Left lung (tissue), 14 donors: ENCODE measurements at regions of chr19 and their contacts with region 1.

Region 1: GRCh38 chr19:11035441-11036377 is 53.6 kb upstream of the LDLR start:
- DNase-seq: peak; percentile 64 to 95 (median 90)
- ATAC-seq: peak; percentile 98
- H3K4me3 ChIP-seq: no peak overlapping the region
- H3K27ac ChIP-seq: peak overlapping the region in 1 of 2 donors; percentile 28
- H3K4me1 ChIP-seq: peaks cover 0 to 13% of the 10 kb centered on the region in 2 donors
- H3K27me3 ChIP-seq: no peaks in the 10 kb centered on the region
- CTCF ChIP-seq: peak; percentile 77 to 87

Region 2: GRCh38 chr19:10858204-10858828 is 177.4 kb before region 1 on chr19:
- intact Hi-C with region 1: no loop called
- DNase-seq: peak in 1 of 4 donors; percentile 33
- ATAC-seq: no peak
- H3K4me3 ChIP-seq: no peak overlapping the region
- H3K27ac ChIP-seq: no peak overlapping the region
- H3K4me1 ChIP-seq: peaks cover 0 to 7% of the 10 kb centered on the region in 2 donors
- H3K27me3 ChIP-seq: no peaks in the 10 kb centered on the region
- CTCF ChIP-seq: peak; percentile 23 to 61

Region 3: GRCh38 chr19:11125994-11126685 is 90.4 kb after region 1 on chr19:
- intact Hi-C with region 1: loop called in 1 of 2 experiments (anchors 5 kb)
- DNase-seq: peak; percentile 74 to 86 (median 80)
- ATAC-seq: peak; percentile 69
- H3K4me3 ChIP-seq: no peak overlapping the region
- H3K27ac ChIP-seq: no peak overlapping the region
- H3K4me1 ChIP-seq: peaks cover 6 to 13% of the 10 kb centered on the region in 2 donors
- H3K27me3 ChIP-seq: no peaks in the 10 kb centered on the region
- CTCF ChIP-seq: peak; percentile 73 to 81

Region 4: GRCh38 chr19:11164879-11165406 is 129.2 kb after region 1 on chr19:
- intact Hi-C with region 1: no loop called
- DNase-seq: peak in 3 of 4 donors; percentile 71 to 93 (median 87)
- ATAC-seq: peak; percentile 56
- H3K4me3 ChIP-seq: no peak overlapping the region
- H3K27ac ChIP-seq: peak overlapping the region; percentile 36 to 79
- H3K4me1 ChIP-seq: peaks cover 8 to 11% of the 10 kb centered on the region in 2 donors
- H3K27me3 ChIP-seq: no peaks in the 10 kb centered on the region
- CTCF ChIP-seq: no peak

Region 5: DNA sequence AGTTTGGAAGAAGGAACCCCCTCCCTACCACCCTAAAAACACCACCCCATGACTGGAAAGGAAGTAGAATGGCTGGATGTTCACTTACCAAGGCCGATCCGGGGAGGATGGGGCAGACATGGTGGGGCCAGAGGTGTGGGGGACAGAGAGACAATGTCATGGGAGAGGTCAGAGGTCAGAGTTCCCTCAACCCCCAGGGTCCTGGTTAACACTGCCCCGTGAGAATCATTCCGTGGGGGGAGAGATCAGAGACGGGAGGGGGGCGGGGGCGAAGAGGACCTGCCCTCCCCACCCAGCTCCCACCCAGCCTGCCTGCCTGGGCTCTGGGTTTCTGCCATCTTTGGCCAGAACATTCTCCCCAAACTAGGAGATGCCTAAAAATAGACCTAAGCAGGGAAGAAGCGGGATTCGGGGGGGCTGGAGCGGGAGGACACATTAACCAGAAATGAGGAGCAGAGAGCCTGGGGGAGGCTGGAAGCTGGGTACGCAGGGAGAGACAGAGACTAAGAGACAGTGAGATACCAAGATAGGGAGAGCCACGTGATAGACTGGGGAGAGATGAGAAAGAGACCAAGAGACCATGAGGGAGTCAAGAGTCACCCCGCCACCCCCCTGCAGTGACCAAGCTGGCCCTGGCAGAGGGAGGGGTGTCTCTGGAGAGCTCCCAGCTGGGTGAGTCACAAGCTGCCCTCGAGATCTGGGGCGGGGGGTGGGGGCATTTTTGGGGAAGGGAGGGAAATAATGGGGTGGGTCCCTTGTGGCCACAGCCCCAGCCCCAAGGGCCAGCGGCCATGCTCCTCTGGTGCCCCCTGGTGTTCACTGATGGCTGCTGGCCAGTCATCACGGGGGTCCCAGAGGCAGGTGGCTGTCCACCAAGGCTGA is 167.7 kb after region 1 on chr19:
- intact Hi-C with region 1: loop called in 1 of 2 experiments (anchors 10 kb)
- DNase-seq: peak; percentile 79 to 94 (median 86)
- ATAC-seq: peak; percentile 78
- H3K4me3 ChIP-seq: no peak overlapping the region
- H3K27ac ChIP-seq: peak overlapping the region; percentile 28 to 62
- H3K4me1 ChIP-seq: peaks cover under 1 to 20% of the 10 kb centered on the region in 2 donors
- H3K27me3 ChIP-seq: no peaks in the 10 kb centered on the region
- CTCF ChIP-seq: peak; percentile 75 to 80